Naive thymus-derived CD4-positive, alpha-beta T cell (primary cell): ENCODE measurements at regions of chr9 and their contacts with region 1.

Region 1: DNA sequence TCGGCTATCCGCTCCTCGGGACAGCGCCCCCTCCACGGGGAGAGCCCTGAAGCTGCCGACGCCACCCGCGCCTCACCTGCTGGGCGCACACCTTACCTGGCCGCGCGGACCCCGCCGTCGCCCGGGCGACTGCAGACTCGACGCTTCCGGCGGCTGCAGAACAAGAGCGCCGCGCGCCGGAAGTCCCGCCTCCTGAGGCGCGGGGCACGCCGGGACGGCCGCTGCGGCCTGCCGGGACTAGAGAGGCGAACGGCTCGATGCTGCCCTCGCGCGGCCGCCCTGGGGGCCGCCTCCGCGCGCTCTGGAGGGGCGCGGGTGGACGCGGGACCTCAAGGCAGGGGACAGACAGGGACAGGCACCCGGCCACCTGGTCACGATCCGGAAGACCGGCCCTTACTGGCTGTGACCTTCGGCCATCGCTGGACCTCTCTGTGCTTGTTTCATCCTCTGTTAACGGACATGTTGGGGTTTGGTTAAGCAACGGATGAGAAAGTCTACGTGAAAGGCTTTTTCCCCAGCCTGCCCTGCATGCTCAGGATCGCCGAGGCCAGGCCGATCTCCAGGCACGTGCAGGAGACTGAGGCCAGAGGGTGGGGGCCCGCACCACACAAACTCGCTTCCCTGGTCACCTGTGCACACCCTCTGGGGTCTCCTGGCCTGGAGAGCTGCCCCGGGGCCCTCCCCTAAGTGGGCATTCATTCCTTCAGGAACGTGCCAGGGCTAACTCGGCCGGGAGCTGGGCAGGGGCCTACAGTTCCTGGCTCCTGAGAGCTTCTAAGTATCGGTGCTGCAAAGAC is at the start of gene SNAPC4:
- DNase-seq: peak; percentile 77 to 93 (median 87)
- ATAC-seq: peak; percentile 91
- H3K4me3 ChIP-seq: peak within 1 kb of the TSS; percentile 62
- H3K4me3 Mint-ChIP-seq: peak within 1 kb of the TSS; percentile 83 to 90 (median 86)
- H3K27ac ChIP-seq: peak within 1 kb of the TSS; percentile 62
- H3K27ac Mint-ChIP-seq: peak within 1 kb of the TSS in 8 of 9 donors; percentile 26 to 78 (median 76)
- H3K4me1 ChIP-seq: peaks cover 33 to 38% of the 10 kb centered on the region in 2 donors
- H3K4me1 Mint-ChIP-seq: peaks cover 30 to 61% (median 45%) of the 10 kb centered on the region in 7 donors
- H3K27me3 ChIP-seq: no peaks in the 10 kb centered on the region
- H3K27me3 Mint-ChIP-seq: no peaks in the 10 kb centered on the region
- total RNA-seq, gene SNAPC4: 10.0 to 16.3 (median 12.8) TPM

Region 2: GRCh38 chr9:136312436-136312835 is 87.8 kb before region 1 on chr9:
- CTCF ChIA-PET with region 1: interaction called, 3 read pairs
- POLR2A ChIA-PET with region 1: no interaction called
- intact Hi-C with region 1: loop called (anchors 1 kb)
- DNase-seq: peak in 7 of 9 donors; percentile 29 to 54 (median 37)
- ATAC-seq: peak; percentile 51
- H3K4me3 ChIP-seq: no peak overlapping the region
- H3K4me3 Mint-ChIP-seq: no peak overlapping the region
- H3K27ac ChIP-seq: no peak overlapping the region
- H3K27ac Mint-ChIP-seq: no peak overlapping the region
- H3K4me1 ChIP-seq: peaks cover 0 to 8% of the 10 kb centered on the region in 2 donors
- H3K4me1 Mint-ChIP-seq: no peaks in the 10 kb centered on the region
- H3K27me3 ChIP-seq: no peaks in the 10 kb centered on the region
- H3K27me3 Mint-ChIP-seq: no peaks in the 10 kb centered on the region

Region 3: DNA sequence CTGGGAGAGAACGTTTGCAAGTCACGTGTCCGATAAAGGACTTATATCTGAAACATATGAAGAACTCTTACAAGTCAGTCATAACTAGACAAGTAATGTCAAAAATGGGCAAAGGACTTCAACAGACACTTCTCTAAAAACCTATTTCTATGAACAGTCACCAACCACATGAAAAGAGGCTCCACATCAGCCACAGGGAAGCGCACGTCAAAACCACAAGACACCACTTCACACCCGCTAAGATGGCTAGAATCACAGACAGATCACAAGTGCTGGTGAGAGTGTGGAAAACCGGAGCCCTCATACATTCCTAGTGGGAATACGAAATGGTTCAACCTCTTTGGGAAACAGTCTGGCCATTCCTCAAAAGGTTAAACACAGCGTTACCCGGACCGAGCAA is 15.2 kb before region 1 on chr9:
- CTCF ChIA-PET with region 1: interaction called, 8 read pairs
- POLR2A ChIA-PET with region 1: no interaction called
- intact Hi-C with region 1: loop called in 1 of 2 experiments (anchors 1 kb)
- DNase-seq: peak in 6 of 9 donors; percentile 16 to 57 (median 40)
- ATAC-seq: peak; percentile 51
- H3K4me3 ChIP-seq: no peak overlapping the region
- H3K4me3 Mint-ChIP-seq: peak overlapping the region in 6 of 10 donors; percentile 8 to 63 (median 20)
- H3K27ac ChIP-seq: no peak overlapping the region
- H3K27ac Mint-ChIP-seq: peak overlapping the region in 4 of 9 donors; percentile 6 to 64 (median 24)
- H3K4me1 ChIP-seq: peaks cover 8 to 20% of the 10 kb centered on the region in 2 donors
- H3K4me1 Mint-ChIP-seq: peaks cover 8 to 22% (median 16%) of the 10 kb centered on the region in 7 donors
- H3K27me3 ChIP-seq: no peaks in the 10 kb centered on the region
- H3K27me3 Mint-ChIP-seq: no peaks in the 10 kb centered on the region

Region 4: GRCh38 chr9:136439550-136440408 is 39.5 kb after region 1 on chr9 and contains the start of gene INPP5E:
- CTCF ChIA-PET with region 1: interaction called, 3 read pairs
- POLR2A ChIA-PET with region 1: no interaction called
- intact Hi-C with region 1: loop called (anchors 1 to 2 kb)
- DNase-seq: peak; percentile 68 to 99 (median 84)
- ATAC-seq: peak; percentile 93
- H3K4me3 ChIP-seq: peak within 1 kb of the TSS; percentile 64
- H3K4me3 Mint-ChIP-seq: peak within 1 kb of the TSS; percentile 79 to 90 (median 85)
- H3K27ac ChIP-seq: peak within 1 kb of the TSS; percentile 84
- H3K27ac Mint-ChIP-seq: peak within 1 kb of the TSS in 8 of 9 donors; percentile 30 to 85 (median 70)
- H3K4me1 ChIP-seq: peaks cover 21% of the 10 kb centered on the region in 2 donors
- H3K4me1 Mint-ChIP-seq: peaks cover 20 to 29% (median 26%) of the 10 kb centered on the region in 7 donors
- H3K27me3 ChIP-seq: no peaks in the 10 kb centered on the region
- H3K27me3 Mint-ChIP-seq: no peaks in the 10 kb centered on the region
- total RNA-seq, gene INPP5E: 15.7 to 23.8 (median 22.6) TPM

Region 5: DNA sequence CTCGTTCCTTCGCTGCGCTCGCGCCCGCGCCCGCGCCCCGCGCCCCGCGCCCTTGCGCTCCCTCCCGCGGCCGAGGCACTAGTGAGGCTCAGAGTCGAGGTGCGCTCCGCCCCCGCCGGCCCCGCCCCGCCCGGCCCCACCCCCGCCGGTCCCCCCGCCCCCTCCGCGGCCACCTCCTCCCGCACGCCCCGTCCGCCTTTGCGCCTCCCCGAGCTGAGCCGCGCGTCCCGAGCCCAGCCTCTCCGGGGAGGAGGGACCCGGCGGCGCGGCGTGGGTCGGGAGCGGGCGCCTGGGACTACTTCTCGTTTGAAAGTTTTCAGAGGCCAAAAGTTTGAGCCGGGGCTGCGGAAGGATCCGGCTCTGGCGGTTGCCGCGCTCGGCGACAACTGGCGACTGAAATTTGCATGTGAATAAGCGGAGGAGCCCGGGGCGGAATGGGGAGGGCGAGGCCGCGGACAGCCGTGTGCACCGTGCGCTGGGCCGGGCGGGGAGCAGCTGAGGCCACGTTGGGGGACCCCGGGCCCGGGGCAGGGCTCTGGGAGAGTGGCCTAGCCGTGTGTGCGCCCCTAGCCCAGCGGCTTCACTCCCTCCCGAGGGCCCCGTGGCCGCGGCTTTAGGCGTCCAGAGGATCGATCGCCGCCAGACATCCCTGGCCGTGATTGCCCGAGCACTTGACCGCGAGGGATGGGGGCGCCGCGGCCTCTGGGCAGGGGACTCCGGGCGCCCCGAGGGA is 145.9 kb after region 1 on chr9 and contains the start of gene NOTCH1:
- CTCF ChIA-PET with region 1: no interaction called
- POLR2A ChIA-PET with region 1: no interaction called
- intact Hi-C with region 1: loop called in 1 of 2 experiments (anchors 10 kb)
- DNase-seq: peak; percentile 77 to 91 (median 86)
- ATAC-seq: peak; percentile 89
- H3K4me3 ChIP-seq: peak within 1 kb of the TSS; percentile 81
- H3K4me3 Mint-ChIP-seq: peak within 1 kb of the TSS; percentile 78 to 95 (median 88)
- H3K27ac ChIP-seq: peak within 1 kb of the TSS; percentile 80
- H3K27ac Mint-ChIP-seq: peak within 1 kb of the TSS; percentile 57 to 90 (median 81)
- H3K4me1 ChIP-seq: peaks cover 20 to 32% of the 10 kb centered on the region in 2 donors
- H3K4me1 Mint-ChIP-seq: peaks cover under 1 to 43% (median 28%) of the 10 kb centered on the region in 7 donors
- H3K27me3 ChIP-seq: no peaks in the 10 kb centered on the region
- H3K27me3 Mint-ChIP-seq: no peaks in the 10 kb centered on the region
- total RNA-seq, gene NOTCH1: 49.7 to 92.9 (median 58.0) TPM

Region 6: DNA sequence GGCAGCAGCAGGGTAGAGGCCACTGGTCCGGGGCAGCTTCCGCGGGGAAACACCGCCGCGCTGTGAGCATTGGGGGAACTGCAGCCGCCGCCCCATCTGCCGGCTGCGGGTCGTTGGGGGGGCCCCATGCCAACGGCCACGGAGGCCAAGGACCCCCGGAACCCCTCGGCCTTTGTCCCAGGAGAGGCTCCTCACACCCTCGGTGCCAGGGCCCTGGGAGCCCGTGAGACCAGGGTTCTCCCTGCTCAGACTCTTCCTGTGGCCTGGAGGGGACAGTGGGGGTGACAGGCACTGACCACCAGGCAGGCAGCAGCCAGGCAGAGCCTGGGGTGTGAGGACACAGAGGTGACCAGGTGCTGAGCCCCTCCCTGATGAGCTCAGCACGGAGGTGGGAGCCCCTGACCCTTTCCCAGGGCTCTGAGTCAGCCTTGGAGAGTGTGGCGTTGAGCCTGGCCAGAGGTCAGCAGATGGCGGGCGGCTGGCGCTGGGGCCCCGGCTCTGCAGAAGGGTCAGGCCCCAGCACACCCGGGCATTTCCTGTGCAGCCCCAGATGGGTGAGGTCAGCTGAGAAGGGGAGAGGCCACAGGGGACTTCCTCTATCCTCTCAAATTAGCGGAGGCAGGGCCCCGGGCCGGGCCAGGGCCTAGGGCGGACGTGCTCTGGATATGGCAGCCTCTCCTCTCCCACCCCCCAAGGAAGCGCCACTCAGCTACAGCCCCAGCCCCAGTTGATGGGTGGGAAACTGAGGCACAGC is 244.5 kb after region 1 on chr9:
- CTCF ChIA-PET with region 1: no interaction called
- POLR2A ChIA-PET with region 1: no interaction called
- intact Hi-C with region 1: loop called in 1 of 2 experiments (anchors 2 kb)
- DNase-seq: peak in 7 of 9 donors; percentile 59 to 78 (median 67)
- ATAC-seq: peak; percentile 92
- H3K4me3 ChIP-seq: no peak overlapping the region
- H3K4me3 Mint-ChIP-seq: no peak overlapping the region
- H3K27ac ChIP-seq: no peak overlapping the region
- H3K27ac Mint-ChIP-seq: no peak overlapping the region
- H3K4me1 ChIP-seq: peaks cover 10% of the 10 kb centered on the region in 2 donors
- H3K4me1 Mint-ChIP-seq: peaks cover 0 to 3% (median 0%) of the 10 kb centered on the region in 7 donors
- H3K27me3 ChIP-seq: peaks cover 0 to 13% of the 10 kb centered on the region in 2 donors
- H3K27me3 Mint-ChIP-seq: peaks cover 12 to 30% (median 28%) of the 10 kb centered on the region in 5 donors

Region 7: DNA sequence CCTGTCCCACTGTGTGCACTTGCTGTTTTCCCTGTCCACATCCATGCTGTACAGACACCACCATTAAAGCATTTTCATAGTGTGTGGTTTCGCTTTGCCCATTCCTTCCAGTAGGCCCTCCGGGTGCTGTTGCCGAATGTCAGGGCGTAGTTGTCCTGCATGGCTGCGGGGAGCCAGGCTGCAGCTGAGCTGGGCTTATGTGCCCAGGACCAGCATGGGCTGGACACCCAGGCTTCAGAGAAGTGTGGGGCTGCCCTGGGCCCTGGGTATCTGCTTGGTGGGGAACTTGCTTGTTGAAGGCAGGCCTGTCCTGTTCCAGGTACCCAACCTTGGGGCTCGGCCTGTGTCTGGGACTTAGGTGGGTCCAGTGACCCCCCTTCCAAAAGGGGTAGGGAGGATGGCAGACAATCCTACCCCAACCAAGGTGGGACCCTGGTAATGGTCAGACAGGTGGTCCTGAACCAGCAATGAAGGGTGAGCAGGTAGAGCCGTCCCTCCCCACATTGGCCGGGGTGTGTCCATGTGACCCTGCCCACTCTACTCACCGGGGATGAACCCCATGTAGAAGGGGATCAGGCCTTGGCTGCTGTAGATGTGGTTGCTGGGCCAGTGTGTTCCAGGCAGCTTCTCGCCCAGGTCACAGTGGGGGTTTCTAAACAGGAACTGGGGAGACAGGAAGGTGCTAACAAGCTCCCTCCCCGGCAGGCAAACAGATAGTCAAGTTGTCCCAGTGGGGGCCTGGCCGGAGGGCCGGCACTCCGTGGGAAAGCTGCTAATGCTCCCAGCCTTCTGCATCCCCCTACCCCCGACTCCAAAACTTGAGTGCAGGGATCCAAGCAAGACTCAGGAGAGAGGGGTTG is 843.6 kb after region 1 on chr9:
- CTCF ChIA-PET with region 1: no interaction called
- POLR2A ChIA-PET with region 1: no interaction called
- intact Hi-C with region 1: no loop called
- DNase-seq: no peak
- ATAC-seq: no peak
- H3K4me3 ChIP-seq: no peak overlapping the region
- H3K4me3 Mint-ChIP-seq: peak overlapping the region in 4 of 10 donors; percentile 5 to 88 (median 22)
- H3K27ac ChIP-seq: no peak overlapping the region
- H3K27ac Mint-ChIP-seq: peak overlapping the region in 2 of 9 donors; percentile 14 to 49
- H3K4me1 ChIP-seq: peaks cover 11 to 14% of the 10 kb centered on the region in 2 donors
- H3K4me1 Mint-ChIP-seq: peaks cover 10 to 32% (median 18%) of the 10 kb centered on the region in 7 donors
- H3K27me3 ChIP-seq: no peaks in the 10 kb centered on the region
- H3K27me3 Mint-ChIP-seq: peaks cover 0 to 4% (median 0%) of the 10 kb centered on the region in 5 donors